ENCODE measurements at regions of chr7 and their contacts with region 1.

Region 1: DNA sequence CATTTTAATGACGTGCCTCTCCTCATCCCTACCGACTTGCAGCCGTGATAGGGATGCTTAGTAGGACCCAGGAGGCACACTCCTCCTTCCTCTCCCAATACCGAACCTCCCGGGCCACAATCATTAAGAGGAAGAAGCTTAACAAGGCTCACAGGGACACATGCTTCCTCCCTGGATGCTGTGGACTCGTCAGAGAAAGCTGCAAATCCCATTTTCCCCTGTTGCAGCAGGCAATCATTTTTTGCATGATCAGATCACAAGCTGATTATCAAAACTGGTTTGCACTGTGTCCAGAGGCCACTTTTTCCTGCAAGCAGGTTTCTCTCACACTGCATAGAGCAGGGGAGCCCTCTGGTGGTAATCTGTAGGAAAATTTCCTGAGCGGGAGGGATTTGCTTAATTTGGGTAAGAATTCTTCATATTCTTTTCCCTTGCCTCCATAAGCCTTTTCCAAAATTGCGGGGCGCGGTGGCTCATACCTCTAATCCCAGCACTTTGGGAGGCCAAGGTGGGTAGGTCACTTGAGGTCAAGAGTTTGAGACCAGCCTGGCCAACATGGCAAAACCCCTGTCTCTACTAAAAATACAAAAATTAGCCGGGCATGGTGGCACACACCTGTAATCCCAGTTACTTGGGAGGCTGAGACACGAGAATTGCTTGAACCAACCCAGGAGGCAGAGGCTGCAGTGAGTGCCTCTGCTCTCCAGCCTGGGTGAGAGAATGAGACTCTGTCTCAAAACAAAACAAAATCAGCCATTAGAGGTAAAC is 16.1 kb upstream of the LAMB4 start:
- DNase-seq: peak in 7 of 9 donors; percentile 12 to 52 (median 44)
- ATAC-seq: peak; percentile 67
- H3K4me3 ChIP-seq: no peak overlapping the region
- H3K4me3 Mint-ChIP-seq: no peak overlapping the region
- H3K27ac ChIP-seq: no peak overlapping the region
- H3K27ac Mint-ChIP-seq: no peak overlapping the region
- H3K4me1 ChIP-seq: no peaks in the 10 kb centered on the region
- H3K4me1 Mint-ChIP-seq: no peaks in the 10 kb centered on the region
- H3K27me3 ChIP-seq: no peaks in the 10 kb centered on the region
- H3K27me3 Mint-ChIP-seq: peaks cover 0 to 24% (median 9%) of the 10 kb centered on the region in 5 donors

Region 2: DNA sequence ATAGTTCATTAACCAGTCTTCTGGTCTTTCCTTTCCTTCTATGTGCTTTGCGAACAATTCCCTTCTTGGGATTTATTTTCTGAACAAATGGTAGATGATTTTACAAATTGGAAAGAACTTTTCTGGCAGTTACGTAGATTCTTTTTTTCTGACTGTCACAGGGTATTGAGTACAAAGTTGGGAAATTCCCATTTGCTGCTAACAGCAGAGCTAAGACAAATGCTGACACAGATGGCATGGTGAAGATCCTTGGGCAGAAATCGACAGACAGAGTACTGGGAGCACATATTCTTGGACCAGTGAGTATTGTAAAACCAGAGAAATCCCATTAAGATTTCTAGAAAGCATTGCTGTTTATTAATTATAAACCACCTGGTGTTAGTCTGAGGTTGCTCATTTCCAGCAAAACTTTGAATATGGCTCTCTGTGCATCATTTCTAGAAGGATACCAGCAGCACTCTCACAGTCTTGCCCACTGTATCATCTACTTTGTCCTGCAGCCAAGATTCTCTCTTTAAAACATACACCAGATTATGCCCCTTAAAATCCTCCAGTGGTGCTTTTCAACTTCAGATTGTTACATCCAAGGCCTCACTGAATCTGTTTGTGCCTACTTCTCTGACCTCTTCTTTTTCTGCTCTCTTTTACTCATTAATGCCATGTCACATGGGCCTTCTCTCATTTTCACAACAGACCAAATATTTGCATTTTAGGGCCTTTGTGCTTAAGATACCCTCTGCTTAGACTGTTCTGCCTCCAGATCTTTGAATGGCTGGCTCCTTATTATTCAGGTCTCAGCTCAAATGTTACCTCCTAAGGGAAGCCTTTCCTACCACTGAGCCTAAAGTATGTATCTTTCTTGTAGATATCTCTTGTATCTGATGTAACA is 228.2 kb before region 1 on chr7:
- CTCF ChIA-PET with region 1: no interaction called
- POLR2A ChIA-PET with region 1: no interaction called
- intact Hi-C with region 1: loop called (anchors 10 kb)
- DNase-seq: no peak
- ATAC-seq: no peak
- H3K4me3 ChIP-seq: no peak overlapping the region
- H3K4me3 Mint-ChIP-seq: no peak overlapping the region
- H3K27ac ChIP-seq: no peak overlapping the region
- H3K27ac Mint-ChIP-seq: peak overlapping the region in 1 of 9 donors; percentile 12
- H3K4me1 ChIP-seq: peaks cover 0 to 2% of the 10 kb centered on the region in 2 donors
- H3K4me1 Mint-ChIP-seq: peaks cover 12 to 46% (median 35%) of the 10 kb centered on the region in 7 donors
- H3K27me3 ChIP-seq: no peaks in the 10 kb centered on the region
- H3K27me3 Mint-ChIP-seq: no peaks in the 10 kb centered on the region

Region 3: GRCh38 chr7:107924841-107925504 is 221.3 kb before region 1 on chr7:
- CTCF ChIA-PET with region 1: no interaction called
- POLR2A ChIA-PET with region 1: no interaction called
- intact Hi-C with region 1: loop called in 1 of 2 experiments (anchors 10 kb)
- DNase-seq: peak in 3 of 9 donors; percentile 5 to 12 (median 8)
- ATAC-seq: peak; percentile 66
- H3K4me3 ChIP-seq: no peak overlapping the region
- H3K4me3 Mint-ChIP-seq: peak overlapping the region in 9 of 10 donors; percentile 13 to 64 (median 31)
- H3K27ac ChIP-seq: peak overlapping the region; percentile 38
- H3K27ac Mint-ChIP-seq: peak overlapping the region in 7 of 9 donors; percentile 9 to 73 (median 50)
- H3K4me1 ChIP-seq: peaks cover 10 to 23% of the 10 kb centered on the region in 2 donors
- H3K4me1 Mint-ChIP-seq: peaks cover 22 to 65% (median 54%) of the 10 kb centered on the region in 7 donors
- H3K27me3 ChIP-seq: no peaks in the 10 kb centered on the region
- H3K27me3 Mint-ChIP-seq: no peaks in the 10 kb centered on the region

Region 4: GRCh38 chr7:108016841-108017775 is 129.1 kb before region 1 on chr7:
- CTCF ChIA-PET with region 1: no interaction called
- POLR2A ChIA-PET with region 1: no interaction called
- intact Hi-C with region 1: loop called in 1 of 2 experiments (anchors 10 kb)
- DNase-seq: no peak
- ATAC-seq: no peak
- H3K4me3 ChIP-seq: no peak overlapping the region
- H3K4me3 Mint-ChIP-seq: no peak overlapping the region
- H3K27ac ChIP-seq: no peak overlapping the region
- H3K27ac Mint-ChIP-seq: no peak overlapping the region
- H3K4me1 ChIP-seq: no peaks in the 10 kb centered on the region
- H3K4me1 Mint-ChIP-seq: peaks cover 0 to 6% (median 0%) of the 10 kb centered on the region in 7 donors
- H3K27me3 ChIP-seq: no peaks in the 10 kb centered on the region
- H3K27me3 Mint-ChIP-seq: peaks cover 5 to 18% (median 17%) of the 10 kb centered on the region in 5 donors

Region 5: DNA sequence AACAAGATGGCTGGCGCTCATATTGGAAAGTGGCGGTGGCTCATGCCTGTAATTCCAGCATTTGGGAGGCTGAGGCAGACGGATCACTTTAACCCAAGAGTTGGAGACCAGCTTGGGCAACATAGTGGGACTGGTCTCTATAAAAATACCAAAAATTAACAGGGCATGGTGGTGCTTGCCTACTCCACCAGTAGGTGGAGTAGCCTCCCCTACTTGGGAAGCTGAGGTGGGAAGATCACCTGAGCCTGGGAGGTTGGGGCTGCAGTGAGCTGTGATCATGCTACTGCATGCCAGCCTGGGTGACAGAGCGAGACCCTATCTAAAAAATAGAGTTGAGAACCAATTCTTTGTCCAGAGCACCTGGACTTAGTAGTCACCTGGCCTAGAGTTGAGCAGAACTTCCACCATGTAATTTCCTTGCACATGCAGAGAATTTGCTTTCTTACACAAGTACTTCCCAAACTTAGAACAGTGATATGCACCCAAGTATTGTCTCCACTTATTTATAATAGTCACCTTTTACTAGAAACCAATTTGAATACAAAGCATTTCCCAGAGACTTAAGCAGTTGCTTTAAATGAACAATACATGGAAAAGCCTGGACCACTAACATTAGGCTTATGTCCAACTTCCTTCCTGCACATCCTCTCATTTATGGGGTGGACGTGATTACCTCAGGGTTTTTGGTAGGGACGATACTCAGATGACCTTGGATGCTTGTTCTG is 32.0 kb before region 1 on chr7:
- CTCF ChIA-PET with region 1: interaction called, 8 read pairs
- POLR2A ChIA-PET with region 1: no interaction called
- intact Hi-C with region 1: loop called (anchors 1 kb)
- DNase-seq: peak in 1 of 9 donors; percentile 5
- ATAC-seq: no peak
- H3K4me3 ChIP-seq: no peak overlapping the region
- H3K4me3 Mint-ChIP-seq: no peak overlapping the region
- H3K27ac ChIP-seq: no peak overlapping the region
- H3K27ac Mint-ChIP-seq: no peak overlapping the region
- H3K4me1 ChIP-seq: no peaks in the 10 kb centered on the region
- H3K4me1 Mint-ChIP-seq: no peaks in the 10 kb centered on the region
- H3K27me3 ChIP-seq: no peaks in the 10 kb centered on the region
- H3K27me3 Mint-ChIP-seq: peaks cover 0 to 5% (median 0%) of the 10 kb centered on the region in 5 donors

Region 6: DNA sequence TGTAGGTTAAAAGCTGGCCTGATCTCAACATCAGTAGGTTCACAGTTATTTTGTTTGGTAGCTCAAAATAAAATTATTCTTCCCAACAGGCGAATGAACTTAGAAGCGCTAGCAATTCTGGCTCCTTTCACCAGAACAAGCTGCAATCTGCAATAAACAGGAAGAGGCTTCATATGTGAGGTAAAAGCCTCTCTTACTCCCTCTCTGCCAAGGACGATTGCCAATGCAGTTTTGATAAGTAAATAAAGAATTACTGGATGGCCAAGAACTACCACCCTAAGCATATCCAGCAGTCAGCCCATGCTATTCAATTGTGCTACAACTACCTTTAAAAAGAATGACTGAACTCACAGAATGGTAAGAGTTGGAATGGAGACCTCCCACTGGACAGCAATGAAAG is 133.9 kb after region 1 on chr7:
- CTCF ChIA-PET with region 1: no interaction called
- POLR2A ChIA-PET with region 1: no interaction called
- intact Hi-C with region 1: no loop called
- DNase-seq: no peak
- ATAC-seq: no peak
- H3K4me3 ChIP-seq: no peak overlapping the region
- H3K4me3 Mint-ChIP-seq: no peak overlapping the region
- H3K27ac ChIP-seq: no peak overlapping the region
- H3K27ac Mint-ChIP-seq: no peak overlapping the region
- H3K4me1 ChIP-seq: no peaks in the 10 kb centered on the region
- H3K4me1 Mint-ChIP-seq: peaks cover 0 to 11% (median 7%) of the 10 kb centered on the region in 7 donors
- H3K27me3 ChIP-seq: no peaks in the 10 kb centered on the region
- H3K27me3 Mint-ChIP-seq: peaks cover 0 to 20% (median 9%) of the 10 kb centered on the region in 5 donors

Measured in naive thymus-derived CD4-positive, alpha-beta T cell (primary cell).